ENCODE measurements at regions of chr16 and their contacts with region 1.

Region 1: DNA sequence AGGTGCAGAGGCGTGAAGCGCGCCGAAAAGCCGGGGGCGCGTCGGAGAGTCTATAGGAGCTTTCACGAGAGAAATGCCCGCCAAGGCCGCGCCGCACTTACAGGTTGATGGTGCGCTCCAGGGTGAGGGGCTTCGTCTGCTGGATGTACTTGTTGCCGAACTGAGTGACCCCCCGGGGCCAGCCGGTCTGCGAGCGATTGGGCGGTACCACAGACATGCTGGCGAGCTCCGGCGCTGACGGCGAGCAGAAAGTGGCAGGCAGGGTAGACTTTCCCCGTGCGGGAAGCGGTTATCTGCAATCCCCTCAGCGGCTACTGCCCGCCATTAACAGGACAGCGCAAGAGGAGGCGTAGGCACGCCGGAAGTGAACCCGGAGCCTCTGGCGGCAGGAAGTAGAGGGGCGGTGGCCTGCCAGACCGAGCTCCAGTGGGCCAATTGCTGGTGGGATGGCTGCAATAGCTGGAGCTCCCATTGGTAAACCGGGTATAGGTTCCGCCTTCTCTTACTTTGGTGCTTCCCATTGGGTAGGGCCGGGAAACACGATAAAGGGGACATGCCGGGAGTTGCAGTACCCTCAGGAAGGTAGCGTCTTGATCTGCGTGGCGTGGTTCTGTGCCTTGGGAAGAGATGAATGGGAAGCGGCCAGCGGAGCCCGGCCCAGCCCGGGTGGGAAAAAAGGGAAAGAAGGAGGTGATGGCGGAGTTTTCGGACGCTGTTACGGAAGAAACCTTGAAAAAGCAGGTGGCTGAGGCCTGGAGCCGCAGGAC is at the starts of genes NUDT21 and OGFOD1:
- DNase-seq: peak; percentile 97
- H3K4me3 Mint-ChIP-seq: peak within 1 kb of the TSS; percentile 94
- H3K27ac Mint-ChIP-seq: peak within 1 kb of the TSS; percentile 95
- H3K4me1 Mint-ChIP-seq: peaks cover 41% of the 10 kb centered on the region
- H3K27me3 Mint-ChIP-seq: no peaks in the 10 kb centered on the region
- total RNA-seq, gene NUDT21: 282 and 297 TPM in 2 replicates
- total RNA-seq, gene OGFOD1: 87.0 and 89.2 TPM in 2 replicates

Region 2: GRCh38 chr16:56356276-56357240 is 94.6 kb before region 1 on chr16:
- intact Hi-C with region 1: loop called (anchors 1 kb)
- DNase-seq: peak; percentile 88
- H3K4me3 Mint-ChIP-seq: peak overlapping the region; percentile 82
- H3K27ac Mint-ChIP-seq: peak overlapping the region; percentile 97
- H3K4me1 Mint-ChIP-seq: peaks cover 33% of the 10 kb centered on the region
- H3K27me3 Mint-ChIP-seq: no peaks in the 10 kb centered on the region